ENCODE measurements at regions of chr10 and their contacts with region 1.

Region 1: GRCh38 chr10:4656576-4657182 is 169.3 kb upstream of the AKR1E2 start:
- DNase-seq: peak; percentile 58
- ATAC-seq: peak; percentile 80
- H3K4me3 ChIP-seq: no peak overlapping the region
- H3K27ac ChIP-seq: no peak overlapping the region
- H3K4me1 ChIP-seq: peaks cover 0 to 11% of the 10 kb centered on the region in 2 experiments; a peak in 2 of 4 replicates
- H3K27me3 ChIP-seq: no peaks in the 10 kb centered on the region
- CTCF ChIP-seq: peak; percentile 72 to 90 (median 80); a peak in 5 of 6 replicates
- POLR2A ChIP-seq: no peak
- RAD21 ChIP-seq: peak; percentile 95

Region 2: DNA sequence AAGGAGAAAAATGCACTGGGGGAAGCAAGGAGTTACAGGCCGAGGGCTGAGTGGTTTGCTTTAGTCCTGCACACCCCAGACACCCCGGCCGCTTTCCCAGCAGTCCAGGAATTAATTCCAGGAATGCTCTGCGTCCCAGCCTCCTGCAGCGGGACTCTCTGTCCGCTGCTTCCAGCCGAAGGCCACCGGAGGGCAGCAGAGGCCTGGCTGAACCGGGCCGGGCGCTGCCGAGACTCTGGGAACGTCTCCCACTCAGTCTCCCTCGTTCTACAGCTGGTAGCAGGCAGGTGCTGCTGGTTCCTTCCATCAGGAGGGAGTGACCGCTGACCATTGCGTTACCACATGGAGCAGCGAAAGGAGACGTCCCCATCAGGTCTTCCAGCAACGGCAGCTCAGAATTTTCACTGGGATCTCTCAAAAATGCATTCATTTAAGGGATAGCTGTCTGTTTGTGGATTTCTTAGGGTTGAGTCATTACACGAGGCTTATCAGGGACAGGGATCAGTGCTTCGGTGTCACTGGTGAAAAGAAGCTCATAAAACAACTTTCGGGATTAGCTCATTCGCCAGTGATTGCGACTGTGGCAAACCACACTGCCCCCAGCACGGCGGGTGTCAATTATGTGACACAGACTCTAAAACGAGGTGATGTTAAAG is 1459.2 kb before region 1 on chr10:
- CTCF ChIA-PET with region 1: interaction called, 3 read pairs
- POLR2A ChIA-PET with region 1: no interaction called
- RAD21 ChIA-PET with region 1: no interaction called
- intact Hi-C with region 1: loop called (anchors 10 kb)
- DNase-seq: peak; percentile 74
- ATAC-seq: peak; percentile 97
- H3K4me3 ChIP-seq: peak overlapping the region; percentile 27 to 47
- H3K27ac ChIP-seq: no peak overlapping the region
- H3K4me1 ChIP-seq: peaks cover 7 to 14% of the 10 kb centered on the region in 2 experiments; a peak in 3 of 4 replicates
- H3K27me3 ChIP-seq: peaks cover 24% of the 10 kb centered on the region; the same call in 1 of the 2 replicates
- CTCF ChIP-seq: peak; percentile 78 to 96 (median 87)
- POLR2A ChIP-seq: no peak
- RAD21 ChIP-seq: peak; percentile 99

Region 3: DNA sequence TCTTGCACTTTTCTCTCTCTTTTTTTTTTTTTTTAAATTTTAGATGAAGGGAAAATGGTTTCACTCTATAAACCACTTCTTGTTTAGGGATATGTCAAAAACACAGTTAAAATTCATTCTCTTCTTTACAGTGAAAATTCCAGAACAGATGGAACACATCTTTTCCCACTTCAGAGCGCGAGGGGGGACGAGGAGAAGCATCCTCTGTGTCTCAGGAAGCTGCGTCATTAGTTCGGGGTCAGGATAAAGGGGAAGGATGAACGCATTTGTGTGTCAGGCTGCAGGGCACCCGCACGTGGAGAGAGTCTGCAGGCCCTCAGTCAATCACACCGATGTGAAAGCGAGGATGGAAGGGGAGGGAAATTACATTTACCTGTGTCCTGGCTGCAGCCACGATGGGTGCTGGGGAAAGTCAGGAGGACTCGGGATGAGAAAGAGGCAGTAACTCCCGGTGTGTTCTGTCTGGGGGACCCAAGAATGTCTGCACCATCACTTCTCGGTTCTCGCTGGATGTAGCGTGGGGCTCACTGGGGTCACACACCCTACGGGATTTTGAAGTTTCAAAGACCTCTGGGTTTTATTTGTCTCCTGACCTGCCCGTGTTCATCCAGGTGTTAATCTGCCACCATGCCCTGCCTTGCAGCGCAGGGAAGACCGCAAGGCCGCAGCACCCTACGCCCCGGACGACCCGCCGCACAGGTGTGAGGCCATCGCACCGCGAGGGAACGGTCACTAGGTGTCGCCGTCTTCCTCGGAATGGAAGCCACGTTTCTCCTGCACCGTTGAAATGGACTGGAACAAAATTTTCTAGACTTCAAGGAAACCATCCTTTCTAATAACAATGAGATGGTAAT is 1417.4 kb before region 1 on chr10:
- CTCF ChIA-PET with region 1: no interaction called
- POLR2A ChIA-PET with region 1: no interaction called
- RAD21 ChIA-PET with region 1: no interaction called
- intact Hi-C with region 1: loop called (anchors 2 kb)
- DNase-seq: peak; percentile 45
- ATAC-seq: peak; percentile 96
- H3K4me3 ChIP-seq: no peak overlapping the region
- H3K27ac ChIP-seq: no peak overlapping the region
- H3K4me1 ChIP-seq: no peaks in the 10 kb centered on the region
- H3K27me3 ChIP-seq: no peaks in the 10 kb centered on the region
- CTCF ChIP-seq: peak; percentile 46 to 78 (median 70); a peak in 5 of 6 replicates
- POLR2A ChIP-seq: no peak
- RAD21 ChIP-seq: peak; percentile 97

Region 4: DNA sequence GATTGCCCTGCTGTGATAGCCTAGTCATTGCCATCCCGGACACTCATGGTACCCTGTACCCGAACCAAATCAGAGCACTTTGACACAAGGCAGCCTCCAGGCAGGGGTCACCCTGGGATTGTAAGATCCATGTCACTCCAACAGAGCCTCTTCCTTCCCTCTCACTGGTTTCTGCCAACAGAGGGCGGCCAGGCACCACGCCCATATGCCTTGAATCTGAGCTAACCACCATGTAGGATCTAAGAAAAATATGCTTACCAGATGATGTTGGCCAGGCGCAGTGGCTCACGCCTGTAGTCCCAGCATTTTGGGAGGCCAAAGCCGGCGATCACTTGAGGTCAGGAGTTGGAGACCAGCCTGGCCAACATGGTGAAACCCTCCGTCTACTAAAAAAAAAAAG is 482.5 kb before region 1 on chr10:
- CTCF ChIA-PET with region 1: no interaction called
- POLR2A ChIA-PET with region 1: no interaction called
- RAD21 ChIA-PET with region 1: interaction called in 1 of 2 experiments, 3 read pairs
- intact Hi-C with region 1: loop called (anchors 5 kb)
- DNase-seq: no peak
- ATAC-seq: peak; percentile 79
- H3K4me3 ChIP-seq: no peak overlapping the region
- H3K27ac ChIP-seq: no peak overlapping the region
- H3K4me1 ChIP-seq: peaks cover 0 to 5% of the 10 kb centered on the region in 2 experiments; a peak in 1 of 4 replicates
- H3K27me3 ChIP-seq: no peaks in the 10 kb centered on the region
- CTCF ChIP-seq: peak; percentile 31 to 66 (median 46); a peak in 5 of 6 replicates
- POLR2A ChIP-seq: no peak
- RAD21 ChIP-seq: peak; percentile 77

Region 5: DNA sequence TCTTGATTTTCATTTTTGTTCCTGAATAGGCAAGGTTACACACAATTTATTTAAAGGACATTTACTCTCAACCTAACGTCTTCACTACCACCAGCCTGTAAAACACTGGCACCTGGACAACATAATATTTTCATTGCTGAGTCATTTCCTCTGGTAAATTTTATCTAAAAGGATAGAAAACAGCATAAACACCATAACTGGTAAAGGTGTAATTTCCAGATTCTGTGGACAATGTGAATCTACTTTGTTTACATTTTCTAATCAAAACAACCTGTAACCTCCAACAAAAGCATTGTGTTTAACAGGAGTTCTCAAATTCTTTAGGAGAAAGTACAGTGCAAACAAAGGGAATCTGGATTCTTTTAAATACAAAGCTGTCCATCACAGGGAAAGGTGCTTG is 302.7 kb before region 1 on chr10:
- CTCF ChIA-PET with region 1: interaction called, 3 read pairs
- POLR2A ChIA-PET with region 1: no interaction called
- RAD21 ChIA-PET with region 1: no interaction called
- intact Hi-C with region 1: loop called (anchors 10 kb)
- DNase-seq: peak; percentile 26
- ATAC-seq: peak; percentile 51
- H3K4me3 ChIP-seq: peak overlapping the region; percentile 1 to 47; a peak in 3 of 4 replicates
- H3K27ac ChIP-seq: peak overlapping the region; percentile 64
- H3K4me1 ChIP-seq: peaks cover 25 to 34% of the 10 kb centered on the region in 2 experiments
- H3K27me3 ChIP-seq: no peaks in the 10 kb centered on the region
- CTCF ChIP-seq: no peak
- POLR2A ChIP-seq: no peak
- RAD21 ChIP-seq: 0 out of 2 replicates have a peak, but pooled peaks have one; percentile 11

Region 6: DNA sequence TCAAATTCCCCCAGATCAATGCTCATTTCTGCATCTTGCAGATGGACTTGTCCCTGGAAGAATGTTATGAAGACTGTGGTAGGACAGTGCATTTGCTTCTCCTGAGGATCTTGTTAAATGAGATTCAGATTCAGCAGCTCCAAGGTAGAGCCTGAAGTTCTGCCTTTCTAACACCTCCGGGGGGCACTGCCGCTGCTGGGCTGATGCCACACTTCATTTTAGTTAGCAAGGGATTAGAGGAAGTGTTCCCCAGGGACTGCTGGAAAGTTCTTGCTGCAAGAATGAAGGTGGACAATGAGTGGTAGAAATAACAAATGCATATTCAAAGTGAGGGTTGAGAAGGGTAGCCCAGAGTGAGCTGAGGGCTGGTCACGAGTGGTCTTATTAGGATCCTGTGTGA is 265.0 kb before region 1 on chr10:
- CTCF ChIA-PET with region 1: interaction called, 3 read pairs
- POLR2A ChIA-PET with region 1: no interaction called
- RAD21 ChIA-PET with region 1: no interaction called
- intact Hi-C with region 1: loop called (anchors 10 kb)
- DNase-seq: peak; percentile 22
- ATAC-seq: peak; percentile 83
- H3K4me3 ChIP-seq: no peak overlapping the region
- H3K27ac ChIP-seq: no peak overlapping the region
- H3K4me1 ChIP-seq: no peaks in the 10 kb centered on the region
- H3K27me3 ChIP-seq: no peaks in the 10 kb centered on the region
- CTCF ChIP-seq: peak; percentile 50 to 56 (median 54); a peak in 5 of 6 replicates
- POLR2A ChIP-seq: no peak
- RAD21 ChIP-seq: peak; percentile 75

Region 7: DNA sequence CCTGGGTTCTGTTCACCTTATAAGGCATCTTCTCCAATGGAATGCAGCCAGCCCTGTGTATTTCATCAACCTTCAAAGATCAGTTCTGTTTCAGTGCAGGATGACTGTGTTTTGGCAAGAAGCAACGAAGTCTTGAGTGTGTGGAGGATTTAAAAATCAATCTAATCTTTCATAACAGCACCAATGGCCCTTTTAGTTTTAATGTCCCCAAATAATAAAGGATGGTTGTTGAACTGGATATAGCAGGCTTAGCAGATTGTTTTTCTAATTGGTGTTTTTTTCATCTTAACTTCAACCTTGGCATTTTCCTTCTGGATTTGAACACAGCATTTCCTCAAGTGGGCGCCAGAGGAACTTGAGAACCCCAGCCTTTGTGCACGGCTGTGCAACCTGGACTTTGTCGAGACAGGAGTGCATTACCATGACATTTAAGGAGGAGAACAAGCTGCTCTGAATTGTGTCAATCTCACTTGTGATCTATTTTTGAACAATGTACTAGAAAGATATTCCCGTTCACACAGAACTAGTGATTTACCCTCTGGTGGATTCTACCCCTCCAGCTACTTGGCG is 143.9 kb before region 1 on chr10:
- CTCF ChIA-PET with region 1: interaction called, 5 read pairs
- POLR2A ChIA-PET with region 1: no interaction called
- RAD21 ChIA-PET with region 1: no interaction called
- intact Hi-C with region 1: loop called (anchors 2 kb)
- DNase-seq: peak; percentile 36
- ATAC-seq: peak; percentile 83
- H3K4me3 ChIP-seq: no peak overlapping the region
- H3K27ac ChIP-seq: no peak overlapping the region
- H3K4me1 ChIP-seq: peaks cover 0 to 5% of the 10 kb centered on the region in 2 experiments; a peak in 1 of 4 replicates
- H3K27me3 ChIP-seq: no peaks in the 10 kb centered on the region
- CTCF ChIP-seq: peak; percentile 62 to 71 (median 63); a peak in 4 of 6 replicates
- POLR2A ChIP-seq: no peak
- RAD21 ChIP-seq: peak; percentile 87

Region 8: GRCh38 chr10:4557469-4557868 is 99.2 kb before region 1 on chr10:
- CTCF ChIA-PET with region 1: no interaction called
- POLR2A ChIA-PET with region 1: no interaction called
- RAD21 ChIA-PET with region 1: no interaction called
- intact Hi-C with region 1: no loop called
- DNase-seq: no peak
- ATAC-seq: no peak
- H3K4me3 ChIP-seq: no peak overlapping the region
- H3K27ac ChIP-seq: no peak overlapping the region
- H3K4me1 ChIP-seq: no peaks in the 10 kb centered on the region
- H3K27me3 ChIP-seq: no peaks in the 10 kb centered on the region
- CTCF ChIP-seq: no peak
- POLR2A ChIP-seq: no peak
- RAD21 ChIP-seq: no peak